ENCODE measurements at regions of chr12 and their contacts with region 1.

Region 1: GRCh38 chr12:51823875-51824565 is 24.5 kb downstream of the FIGNL2 start:
- DNase-seq: peak; percentile 59
- ATAC-seq: peak; percentile 67
- H3K4me3 ChIP-seq: no peak overlapping the region
- H3K27ac ChIP-seq: no peak overlapping the region
- H3K4me1 ChIP-seq: peaks cover 10 to 26% of the 10 kb centered on the region in 2 experiments
- H3K27me3 ChIP-seq: no peaks in the 10 kb centered on the region
- CTCF ChIP-seq: peak; percentile 67 to 74 (median 69)
- POLR2A ChIP-seq: no peak
- RAD21 ChIP-seq: peak; percentile 86

Region 2: GRCh38 chr12:51424662-51425438 is 399.2 kb before region 1 on chr12 and contains the start of gene SLC4A8:
- CTCF ChIA-PET with region 1: interaction called, 54 read pairs
- POLR2A ChIA-PET with region 1: interaction called, 3 read pairs
- RAD21 ChIA-PET with region 1: interaction called in 1 of 2 experiments, 4 read pairs
- intact Hi-C with region 1: loop called (anchors 1 kb)
- DNase-seq: peak; percentile 57
- ATAC-seq: peak; percentile 94
- H3K4me3 ChIP-seq: peak within 1 kb of the TSS; percentile 37 to 51
- H3K27ac ChIP-seq: no peak within 1 kb of the TSS
- H3K4me1 ChIP-seq: peaks cover 7 to 9% of the 10 kb centered on the region in 2 experiments; a peak in 2 of 4 replicates
- H3K27me3 ChIP-seq: no peaks in the 10 kb centered on the region
- CTCF ChIP-seq: peak; percentile 71 to 84 (median 83)
- POLR2A ChIP-seq: no peak
- RAD21 ChIP-seq: peak; percentile 71
- total RNA-seq, gene SLC4A8: 1.4 TPM

Region 3: GRCh38 chr12:51836041-51836826 is 12.2 kb after region 1 on chr12:
- CTCF ChIA-PET with region 1: interaction called, 12 read pairs
- POLR2A ChIA-PET with region 1: no interaction called
- RAD21 ChIA-PET with region 1: no interaction called
- intact Hi-C with region 1: no loop called
- DNase-seq: no peak
- ATAC-seq: peak; percentile 72
- H3K4me3 ChIP-seq: no peak overlapping the region
- H3K27ac ChIP-seq: no peak overlapping the region
- H3K4me1 ChIP-seq: peaks cover 0 to 9% of the 10 kb centered on the region in 2 experiments; a peak in 1 of 4 replicates
- H3K27me3 ChIP-seq: peaks cover 23% of the 10 kb centered on the region; the same call in 1 of the 2 replicates
- CTCF ChIP-seq: no peak
- POLR2A ChIP-seq: no peak
- RAD21 ChIP-seq: no peak

Region 4: DNA sequence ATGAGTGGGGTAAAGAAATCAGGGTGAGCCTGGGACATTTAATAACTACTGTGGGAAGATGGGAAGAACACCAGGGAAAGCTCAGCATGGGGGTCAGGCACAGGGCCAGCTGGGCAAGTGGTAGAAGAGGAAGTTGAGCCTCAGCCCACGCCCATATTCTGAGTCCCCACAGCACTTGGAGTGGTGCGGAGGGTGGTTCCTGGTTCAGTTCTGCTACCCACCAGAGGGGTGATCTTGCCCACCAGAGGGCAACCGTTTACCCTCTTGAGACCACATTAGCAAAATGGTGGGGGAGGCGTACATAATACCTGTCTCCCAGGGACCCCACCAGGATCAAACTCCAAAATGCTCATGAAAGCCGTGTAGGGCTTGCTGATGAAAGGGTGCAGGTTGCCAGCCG is 47.1 kb after region 1 on chr12:
- CTCF ChIA-PET with region 1: interaction called, 10 read pairs
- POLR2A ChIA-PET with region 1: no interaction called
- RAD21 ChIA-PET with region 1: interaction called, 4 read pairs
- intact Hi-C with region 1: loop called (anchors 5 kb)
- DNase-seq: no peak
- ATAC-seq: no peak
- H3K4me3 ChIP-seq: no peak overlapping the region
- H3K27ac ChIP-seq: no peak overlapping the region
- H3K4me1 ChIP-seq: peaks cover 0 to 6% of the 10 kb centered on the region in 2 experiments; a peak in 1 of 4 replicates
- H3K27me3 ChIP-seq: no peaks in the 10 kb centered on the region
- CTCF ChIP-seq: no peak
- POLR2A ChIP-seq: no peak
- RAD21 ChIP-seq: no peak

Region 5: GRCh38 chr12:51879102-51879501 is 55.1 kb after region 1 on chr12:
- CTCF ChIA-PET with region 1: interaction called, 10 read pairs
- POLR2A ChIA-PET with region 1: no interaction called
- RAD21 ChIA-PET with region 1: interaction called, 4 read pairs
- intact Hi-C with region 1: loop called (anchors 5 kb)
- DNase-seq: no peak
- ATAC-seq: no peak
- H3K4me3 ChIP-seq: no peak overlapping the region
- H3K27ac ChIP-seq: no peak overlapping the region
- H3K4me1 ChIP-seq: peaks cover 0 to under 1% of the 10 kb centered on the region in 2 experiments; a peak in 1 of 4 replicates
- H3K27me3 ChIP-seq: no peaks in the 10 kb centered on the region
- CTCF ChIP-seq: no peak
- POLR2A ChIP-seq: no peak
- RAD21 ChIP-seq: no peak

Region 6: GRCh38 chr12:51980051-51980808 is 156.2 kb after region 1 on chr12:
- CTCF ChIA-PET with region 1: no interaction called
- POLR2A ChIA-PET with region 1: no interaction called
- RAD21 ChIA-PET with region 1: no interaction called
- intact Hi-C with region 1: loop called (anchors 5 kb)
- DNase-seq: no peak
- ATAC-seq: peak; percentile 97
- H3K4me3 ChIP-seq: no peak overlapping the region
- H3K27ac ChIP-seq: no peak overlapping the region
- H3K4me1 ChIP-seq: no peaks in the 10 kb centered on the region
- H3K27me3 ChIP-seq: no peaks in the 10 kb centered on the region
- CTCF ChIP-seq: peak; percentile 82 to 98 (median 95)
- POLR2A ChIP-seq: no peak
- RAD21 ChIP-seq: peak; percentile 82